ENCODE measurements at regions of chr11 and their contacts with region 1.

Region 1: GRCh38 chr11:69463181-69463994 is 18.1 kb upstream of the LINC01488 start:
- DNase-seq: peak; percentile 60
- H3K4me3 ChIP-seq: no peak overlapping the region
- CTCF ChIP-seq: no peak

Region 2: DNA sequence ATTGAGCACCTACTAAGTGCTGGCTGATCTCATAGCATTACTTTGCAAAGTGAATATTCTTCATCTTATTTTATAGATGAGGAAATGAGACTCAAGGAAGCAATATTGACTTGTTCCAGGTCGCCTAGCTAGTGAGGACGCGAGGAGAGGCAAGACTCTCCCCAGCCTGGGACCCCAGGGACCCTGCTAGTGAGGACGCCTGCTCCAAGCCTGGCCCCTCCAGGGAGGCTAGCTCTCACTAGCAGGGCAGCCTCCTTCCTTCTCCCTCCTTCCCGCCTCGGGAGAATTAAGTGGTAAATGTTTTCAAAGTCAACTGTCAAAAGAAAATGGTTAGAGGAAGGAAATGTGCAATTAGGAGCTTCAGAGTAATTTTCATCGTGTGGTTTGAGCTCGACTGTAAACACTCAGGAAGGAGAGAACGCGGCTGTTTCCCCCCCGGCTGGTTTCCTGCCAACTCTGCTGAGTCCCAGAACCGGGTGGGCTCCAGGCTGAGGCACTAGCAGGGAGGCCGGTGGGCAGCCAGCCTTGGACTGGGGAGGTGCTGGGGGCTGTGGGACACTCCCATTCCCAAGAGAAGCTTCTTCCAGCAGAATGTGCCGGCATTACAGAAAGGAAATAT is 151.5 kb before region 1 on chr11:
- in situ Hi-C with region 1: loop called (anchors 10 kb)
- DNase-seq: no peak
- H3K4me3 ChIP-seq: no peak overlapping the region
- CTCF ChIP-seq: no peak

Region 3: DNA sequence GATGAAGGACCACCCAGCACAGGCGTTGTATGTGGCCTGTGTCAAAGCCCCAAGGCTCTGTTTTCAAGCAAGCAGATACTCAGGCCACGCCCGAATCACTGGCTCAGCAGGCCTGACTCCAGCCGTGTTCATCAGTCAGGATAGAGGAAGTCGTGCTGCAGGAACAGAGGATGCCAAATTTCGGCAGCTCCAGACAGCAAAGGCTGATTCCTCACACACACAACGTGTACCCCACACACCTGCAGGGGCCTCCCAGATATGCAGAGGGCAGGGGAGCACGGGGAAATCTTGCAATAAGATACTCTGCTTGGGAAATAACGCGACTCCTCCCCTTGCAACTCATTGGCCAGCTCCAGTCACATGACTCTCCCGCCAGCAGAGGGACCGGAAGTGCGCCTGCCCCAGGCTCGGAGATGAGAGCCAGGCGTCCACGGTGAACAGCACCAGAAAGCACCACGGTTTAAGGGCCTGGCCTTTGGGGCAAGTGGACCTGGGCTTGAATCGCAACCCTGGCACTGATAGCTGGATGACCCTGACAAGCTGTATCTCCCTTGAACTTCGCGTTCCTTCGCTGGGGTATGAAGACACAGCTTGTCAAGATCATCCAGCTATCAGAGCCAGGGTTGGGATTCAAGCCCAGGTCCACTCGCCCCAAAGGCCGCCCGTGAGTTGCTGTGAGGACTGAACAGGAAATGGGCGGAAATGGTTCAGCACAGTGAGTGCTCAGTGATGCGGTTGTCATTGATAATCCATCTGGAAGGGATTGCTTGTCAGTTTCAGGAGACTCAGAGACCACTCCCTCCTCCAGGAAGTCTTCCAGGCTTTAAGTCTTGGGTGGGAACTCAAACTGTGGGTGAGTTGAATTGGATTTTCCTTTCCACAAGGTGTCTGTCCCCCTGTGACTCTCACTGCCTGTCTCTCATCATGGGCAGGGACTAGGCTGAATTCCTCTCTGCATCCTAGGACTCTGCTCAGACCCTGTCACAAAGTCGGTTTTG is 81.0 kb before region 1 on chr11:
- in situ Hi-C with region 1: loop called (anchors 10 kb)
- DNase-seq: no peak
- H3K4me3 ChIP-seq: no peak overlapping the region
- CTCF ChIP-seq: no peak

Region 4: GRCh38 chr11:69524282-69524911 is 61.0 kb after region 1 on chr11:
- in situ Hi-C with region 1: loop called (anchors 5 kb)
- DNase-seq: no peak
- H3K4me3 ChIP-seq: no peak overlapping the region
- CTCF ChIP-seq: no peak

Region 5: GRCh38 chr11:69576069-69576782 is 112.8 kb after region 1 on chr11:
- in situ Hi-C with region 1: no loop called
- DNase-seq: no peak
- H3K4me3 ChIP-seq: no peak overlapping the region
- CTCF ChIP-seq: no peak

Measured in astrocyte of the cerebellum (primary cell).